Left ventricle myocardium superior (tissue), 1 donor: ENCODE measurements at regions of chr2 and their contacts with region 1.

Region 1: GRCh38 chr2:121080013-121080772 is 204.8 kb downstream of the TFCP2L1 start:
- DNase-seq: no peak
- ATAC-seq: peak; percentile 52

Region 2: GRCh38 chr2:120675460-120676130 is 404.6 kb before region 1 on chr2:
- intact Hi-C with region 1: no loop called
- DNase-seq: peak; percentile 76
- ATAC-seq: peak; percentile 67

Region 3: DNA sequence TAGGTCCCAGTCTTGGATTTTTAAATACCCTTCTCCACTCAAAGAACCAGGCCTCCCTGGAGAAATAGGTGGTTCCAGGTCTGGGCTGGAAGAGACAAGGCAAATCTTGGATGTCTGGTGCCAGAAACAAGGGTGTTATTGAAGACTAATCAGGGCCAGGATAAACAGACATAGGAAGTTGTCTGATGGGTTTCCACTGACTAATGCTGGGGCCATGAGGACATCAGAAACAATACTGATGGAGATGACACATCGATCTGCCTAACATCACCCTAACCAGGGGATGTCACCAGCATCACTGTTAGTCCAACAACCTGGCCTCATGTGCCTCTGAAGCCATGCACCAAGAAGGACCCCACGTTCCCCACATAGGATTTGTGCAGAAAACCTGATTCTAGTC is 387.1 kb before region 1 on chr2:
- intact Hi-C with region 1: loop called (anchors 2 kb)
- DNase-seq: no peak
- ATAC-seq: no peak

Region 4: GRCh38 chr2:120983344-120983743 is 96.8 kb before region 1 on chr2:
- intact Hi-C with region 1: no loop called
- DNase-seq: no peak
- ATAC-seq: peak; percentile 33